ENCODE measurements at regions of chr2 and their contacts with region 1.

Region 1: DNA sequence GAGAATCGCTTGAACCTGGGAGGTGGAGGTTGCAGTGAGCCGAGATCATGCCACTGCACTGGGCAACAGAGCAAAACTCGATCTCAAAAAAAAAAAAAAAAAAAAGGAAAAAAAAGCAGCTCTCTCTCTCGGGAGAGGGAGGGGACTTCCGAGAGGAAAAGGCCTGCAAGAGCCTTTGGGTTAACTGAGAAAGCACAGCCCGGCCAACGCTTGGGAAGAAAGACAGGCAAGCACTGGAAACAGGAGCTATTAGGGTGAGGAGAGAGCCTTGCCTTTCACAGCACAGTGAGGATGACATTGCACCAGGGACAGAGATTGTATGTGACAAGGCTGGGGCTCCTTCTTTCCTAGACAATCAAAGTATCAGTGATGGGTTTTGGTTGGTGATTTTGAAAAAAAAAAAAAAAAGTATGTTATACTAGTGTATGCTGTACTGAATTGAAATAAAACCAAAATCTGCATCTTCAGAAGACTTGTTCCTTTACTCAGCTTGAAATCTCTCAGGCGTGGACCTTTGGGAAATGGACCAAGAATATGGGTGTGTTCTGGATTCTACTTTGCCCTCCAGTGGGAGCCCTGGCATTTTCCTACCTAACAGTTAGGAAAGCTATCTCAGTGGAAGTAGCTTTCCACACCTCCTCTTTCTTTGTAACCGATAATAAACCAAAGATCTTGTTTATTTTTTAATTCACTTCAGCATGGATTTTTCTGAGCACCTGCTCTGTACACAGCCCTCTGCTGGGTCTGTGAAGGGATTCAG is 16.7 kb downstream of the SRSF7 start:
- DNase-seq: no peak
- H3K4me3 ChIP-seq: no peak overlapping the region
- H3K27ac ChIP-seq: no peak overlapping the region
- H3K4me1 ChIP-seq: peaks cover 37% of the 10 kb centered on the region
- H3K27me3 ChIP-seq: no peaks in the 10 kb centered on the region
- CTCF ChIP-seq: no peak

Region 2: DNA sequence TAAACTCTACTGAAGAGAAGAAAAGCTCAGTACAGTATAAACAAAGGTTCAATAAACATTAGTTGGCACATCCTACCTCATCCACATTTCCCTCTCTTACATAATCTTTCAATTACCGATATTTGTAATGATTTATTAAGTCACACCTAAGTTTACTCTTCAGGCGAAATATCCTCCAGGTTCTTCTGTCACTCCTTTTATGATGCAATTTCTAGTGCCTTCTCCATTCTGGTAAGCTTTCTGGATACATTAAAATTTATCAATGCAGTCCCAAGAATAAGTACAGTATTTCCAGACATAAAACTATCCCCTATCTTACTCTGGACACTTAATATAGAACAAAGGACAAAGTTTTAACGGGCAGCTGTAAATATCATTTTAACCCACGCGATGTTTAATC is 137.4 kb before region 1 on chr2:
- CTCF ChIA-PET with region 1: no interaction called
- POLR2A ChIA-PET with region 1: interaction called, 13 read pairs
- intact Hi-C with region 1: loop called (anchors 5 kb)
- DNase-seq: no peak
- H3K4me3 ChIP-seq: no peak overlapping the region
- H3K27ac ChIP-seq: no peak overlapping the region
- H3K4me1 ChIP-seq: peaks cover 61% of the 10 kb centered on the region
- H3K27me3 ChIP-seq: no peaks in the 10 kb centered on the region
- CTCF ChIP-seq: no peak

Region 3: DNA sequence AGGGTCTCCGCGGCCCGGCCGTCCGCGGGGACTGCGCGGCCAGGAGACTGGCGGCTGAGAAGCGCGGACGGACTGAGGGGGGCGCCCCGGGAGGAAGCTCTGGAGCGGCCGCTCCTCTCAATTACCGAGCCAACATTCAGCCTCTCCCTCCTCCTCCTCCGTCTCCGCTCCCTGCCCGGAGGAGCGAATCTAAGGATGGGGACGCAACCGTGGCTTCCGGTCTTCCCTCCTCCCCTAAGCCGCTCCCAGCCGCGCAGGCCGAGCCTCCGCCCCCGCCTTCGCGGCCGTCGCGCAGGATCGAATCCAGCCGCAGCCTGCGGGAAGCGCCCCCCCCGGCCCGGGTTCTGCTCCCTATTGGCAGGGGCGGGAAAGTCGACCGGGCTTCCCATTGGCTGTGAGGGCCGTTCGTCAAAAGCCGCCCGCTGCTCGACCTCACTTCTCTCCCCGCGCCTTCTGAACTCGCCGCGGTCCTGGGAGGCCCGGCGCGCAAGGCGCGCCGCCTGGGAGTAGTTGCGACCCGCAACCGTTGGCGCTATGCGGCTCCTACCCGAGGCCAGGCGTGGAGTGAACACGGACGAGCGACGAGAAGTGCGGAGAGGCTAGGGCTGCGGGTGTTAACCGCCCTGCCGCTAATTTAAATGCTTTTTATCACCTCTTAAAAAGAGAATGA is 131.6 kb before region 1 on chr2 and contains the start of gene HNRNPLL:
- CTCF ChIA-PET with region 1: no interaction called
- POLR2A ChIA-PET with region 1: interaction called, 13 read pairs
- intact Hi-C with region 1: loop called (anchors 5 kb)
- DNase-seq: peak; percentile 99
- H3K4me3 ChIP-seq: peak within 1 kb of the TSS; percentile 93
- H3K27ac ChIP-seq: peak within 1 kb of the TSS; percentile 96
- H3K4me1 ChIP-seq: peaks cover 28% of the 10 kb centered on the region
- H3K27me3 ChIP-seq: no peaks in the 10 kb centered on the region
- CTCF ChIP-seq: no peak
- total RNA-seq, gene HNRNPLL: 73.8 and 82.0 TPM in 2 replicates

Measured in A673 (cell line).